ENCODE measurements at regions of chr17 and their contacts with region 1.

Region 1: DNA sequence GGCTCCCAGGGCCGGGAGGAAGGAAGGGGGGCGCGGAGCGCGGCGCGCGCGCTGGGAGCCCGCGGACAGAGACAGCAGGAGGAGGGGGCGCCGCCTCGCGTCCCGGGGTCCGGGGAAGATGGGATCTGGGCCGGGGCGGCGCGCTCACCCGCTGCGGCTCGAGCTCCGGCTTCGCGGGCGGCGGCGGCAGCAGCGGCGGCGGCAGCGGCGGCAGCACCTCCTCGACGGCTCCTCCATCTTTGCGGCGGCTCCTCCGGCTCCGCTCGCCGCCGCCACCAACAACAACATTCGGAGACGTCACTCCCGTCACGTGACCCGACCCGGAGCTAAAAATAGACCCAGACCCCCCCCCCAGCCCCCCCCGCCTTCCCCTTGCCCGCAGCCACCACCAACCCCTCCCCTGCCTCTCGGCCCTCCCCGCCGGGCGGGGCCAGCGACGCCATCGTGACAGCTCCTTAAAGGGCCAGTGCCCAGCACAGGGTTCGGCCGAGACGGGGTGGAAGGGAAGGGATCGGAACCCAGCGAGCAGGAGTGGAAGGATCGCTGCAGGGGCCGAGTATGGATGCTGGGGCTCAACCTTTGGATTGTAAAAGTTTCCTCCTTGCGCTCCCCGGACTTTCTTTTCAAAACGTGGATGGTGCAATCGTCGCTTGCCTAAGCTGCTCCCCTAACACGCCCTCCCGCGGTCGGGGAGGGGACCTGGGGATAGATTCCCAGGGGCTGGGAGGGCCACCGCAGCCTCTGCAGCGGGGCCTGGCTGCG is at the start of gene HDAC5:
- DNase-seq: peak; percentile 97
- ATAC-seq: peak; percentile 98
- total RNA-seq, gene HDAC5: 67.7 TPM

Region 2: GRCh38 chr17:43994272-43995149 is 129.0 kb before region 1 on chr17:
- intact Hi-C with region 1: no loop called
- DNase-seq: peak; percentile 71
- ATAC-seq: peak; percentile 94

Region 3: DNA sequence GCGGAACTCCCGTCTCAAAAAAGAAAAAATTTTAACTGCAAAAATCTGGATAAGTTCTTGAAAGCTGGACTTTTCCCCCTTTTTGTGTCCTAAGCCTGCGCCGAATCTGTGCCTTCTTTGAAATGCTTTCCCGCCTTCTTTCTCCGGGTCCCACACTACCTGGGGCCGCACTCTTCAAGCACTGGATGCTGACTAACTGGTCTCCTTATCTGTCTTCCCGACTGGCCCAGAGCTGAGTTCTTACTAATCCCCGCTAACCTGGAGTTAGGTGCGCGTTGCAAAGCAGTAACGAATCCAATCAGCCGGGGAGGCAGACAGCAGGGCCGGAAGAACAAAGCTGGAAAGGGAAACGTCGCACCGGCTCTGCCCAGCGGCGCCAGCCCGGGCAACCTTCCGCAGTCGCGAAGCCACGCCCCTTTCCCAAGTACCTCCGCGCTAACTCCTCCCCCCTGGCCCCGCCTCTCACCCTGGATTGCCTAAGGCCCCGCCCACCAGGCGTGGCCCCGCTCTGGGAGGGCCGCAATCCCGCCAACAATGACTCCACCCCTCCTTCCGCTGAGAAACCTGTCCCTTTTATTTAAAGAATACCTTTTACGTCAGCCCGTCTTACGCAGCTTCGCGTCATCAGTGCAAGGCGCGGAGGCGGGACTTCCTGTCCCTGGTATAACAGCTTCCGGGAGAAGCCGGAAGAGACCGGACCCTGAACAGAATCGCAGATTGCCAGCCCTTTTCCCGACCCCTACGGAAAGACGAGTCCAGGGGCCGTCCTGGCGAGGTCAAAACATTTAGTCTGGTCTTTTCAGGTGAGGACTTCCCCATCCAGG is 63.0 kb after region 1 on chr17 and contains the start of gene TMUB2:
- intact Hi-C with region 1: loop called (anchors 10 kb)
- DNase-seq: peak; percentile 99
- ATAC-seq: peak; percentile 96
- total RNA-seq, gene TMUB2: 19.6 TPM